GM12878 (cell line): ENCODE measurements at regions of chr6 and their contacts with region 1.

Region 1: GRCh38 chr6:18155150-18155863 is at the start of gene KDM1B:
- DNase-seq: peak; percentile 86
- ATAC-seq: peak; percentile 90
- H3K4me3 ChIP-seq: peak within 1 kb of the TSS; percentile 85
- H3K27ac ChIP-seq: peak within 1 kb of the TSS; percentile 81
- H3K4me1 ChIP-seq: peaks cover 9% of the 10 kb centered on the region
- H3K27me3 ChIP-seq: no peaks in the 10 kb centered on the region
- CTCF ChIP-seq: no peak
- EP300 ChIP-seq: no peak
- POLR2A ChIP-seq: peak; percentile 79
- RAD21 ChIP-seq: no peak
- polyA plus RNA-seq, gene KDM1B: 1.7 to 2.9 TPM

Region 2: GRCh38 chr6:18004256-18004985 is 150.9 kb before region 1 on chr6:
- CTCF ChIA-PET with region 1: no interaction called
- POLR2A ChIA-PET with region 1: no interaction called
- RAD21 ChIA-PET with region 1: no interaction called
- SMC1A ChIA-PET with region 1: no interaction called
- in situ Hi-C with region 1: no loop called
- intact Hi-C with region 1: no loop called
- DNase-seq: no peak
- ATAC-seq: no peak
- H3K4me3 ChIP-seq: no peak overlapping the region
- H3K27ac ChIP-seq: no peak overlapping the region
- H3K4me1 ChIP-seq: no peaks in the 10 kb centered on the region; the same call in 1 of the 2 replicates
- H3K27me3 ChIP-seq: no peaks in the 10 kb centered on the region; a peak in 1 of 4 replicates
- CTCF ChIP-seq: no peak
- EP300 ChIP-seq: no peak
- POLR2A ChIP-seq: no peak
- RAD21 ChIP-seq: no peak

Region 3: GRCh38 chr6:18211338-18211737 is 56.0 kb after region 1 on chr6:
- CTCF ChIA-PET with region 1: interaction called, 3 read pairs
- POLR2A ChIA-PET with region 1: interaction called, 4 read pairs
- RAD21 ChIA-PET with region 1: interaction called, 3 read pairs
- SMC1A ChIA-PET with region 1: interaction called, 7 read pairs
- in situ Hi-C with region 1: no loop called
- intact Hi-C with region 1: loop called (anchors 2 kb)
- DNase-seq: peak; percentile 91
- ATAC-seq: peak; percentile 87
- H3K4me3 ChIP-seq: no peak overlapping the region
- H3K27ac ChIP-seq: peak overlapping the region; percentile 45; the same call in 1 of the 2 replicates
- H3K4me1 ChIP-seq: peaks cover 53% of the 10 kb centered on the region
- H3K27me3 ChIP-seq: no peaks in the 10 kb centered on the region
- CTCF ChIP-seq: no peak
- EP300 ChIP-seq: peak; percentile 33 to 86; a peak in 2 of 4 replicates
- POLR2A ChIP-seq: peak; percentile 68
- RAD21 ChIP-seq: peak; percentile 25; the same call in 1 of the 2 replicates